ENCODE measurements at regions of chr3 and their contacts with region 1.

Region 1: DNA sequence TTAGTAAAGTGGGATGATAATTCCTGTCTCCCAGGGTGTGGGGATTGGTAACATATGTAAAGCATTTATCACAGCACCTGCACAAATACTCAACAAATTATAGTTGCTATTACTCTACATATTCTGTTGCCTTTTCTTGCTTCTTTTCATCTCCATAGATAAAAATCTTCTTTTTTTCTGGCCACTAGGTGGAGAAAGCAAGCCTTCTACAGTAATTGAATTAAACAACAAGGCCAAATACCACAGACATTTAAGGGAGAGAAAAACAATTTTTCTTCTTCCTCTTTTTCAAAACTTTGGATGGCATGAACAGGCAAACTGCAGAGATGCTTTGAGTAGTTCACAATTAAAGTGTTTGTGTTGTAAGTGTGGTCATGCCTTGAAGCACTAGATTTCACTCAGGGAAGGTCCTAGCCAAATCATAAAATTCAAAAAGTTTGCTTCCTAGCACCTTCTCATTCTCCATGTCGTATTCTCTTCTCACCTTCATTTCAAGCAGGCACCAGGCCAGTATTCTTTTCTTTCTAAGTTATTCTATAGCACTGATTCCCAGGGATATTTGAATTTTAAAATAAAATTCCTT is 493.4 kb upstream of the TGFBR2 start:
- DNase-seq: no peak
- ATAC-seq: peak; percentile 36
- H3K4me3 ChIP-seq: no peak overlapping the region
- H3K27ac ChIP-seq: no peak overlapping the region
- H3K4me1 ChIP-seq: no peaks in the 10 kb centered on the region
- H3K27me3 ChIP-seq: no peaks in the 10 kb centered on the region
- CTCF ChIP-seq: peak; percentile 69

Region 2: DNA sequence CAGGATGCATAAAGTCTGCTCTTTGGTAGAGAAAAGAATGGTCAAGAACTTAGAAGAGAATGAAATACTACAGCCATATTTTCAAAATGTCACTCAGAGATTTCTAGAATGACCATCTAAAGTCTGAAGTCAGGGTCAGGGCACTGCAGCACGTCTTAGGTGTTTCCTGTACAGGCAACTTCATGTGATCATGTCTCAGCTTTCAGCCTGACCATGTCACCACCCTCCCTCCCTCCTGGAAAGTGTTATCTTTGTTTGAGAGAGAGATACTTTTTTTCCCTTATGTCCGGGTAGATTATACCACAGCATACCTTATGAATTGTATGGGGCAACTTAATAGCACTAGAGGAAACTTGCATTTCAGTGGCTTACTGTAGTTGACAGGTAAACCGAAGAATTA is 64.6 kb before region 1 on chr3:
- intact Hi-C with region 1: no loop called
- DNase-seq: no peak
- ATAC-seq: no peak
- H3K4me3 ChIP-seq: no peak overlapping the region
- H3K27ac ChIP-seq: no peak overlapping the region
- H3K4me1 ChIP-seq: no peaks in the 10 kb centered on the region
- H3K27me3 ChIP-seq: no peaks in the 10 kb centered on the region
- CTCF ChIP-seq: no peak

Region 3: GRCh38 chr3:30693470-30694120 is 580.6 kb after region 1 on chr3:
- intact Hi-C with region 1: loop called (anchors 10 kb)
- DNase-seq: no peak
- ATAC-seq: peak; percentile 90
- H3K4me3 ChIP-seq: no peak overlapping the region
- H3K27ac ChIP-seq: no peak overlapping the region
- H3K4me1 ChIP-seq: peaks cover 46% of the 10 kb centered on the region
- H3K27me3 ChIP-seq: no peaks in the 10 kb centered on the region
- CTCF ChIP-seq: peak; percentile 83

Measured in upper lobe of right lung (tissue), 1 donor.